Activated CD8-positive, alpha-beta memory T cell treated with anti-CD3 and anti-CD28 coated beads, Interleukin-2, amount 10 ng/mL, durations not matched to agents 7 days and 5 days (primary cell): ENCODE measurements at regions of chr2 and their contacts with region 1.

Region 1: DNA sequence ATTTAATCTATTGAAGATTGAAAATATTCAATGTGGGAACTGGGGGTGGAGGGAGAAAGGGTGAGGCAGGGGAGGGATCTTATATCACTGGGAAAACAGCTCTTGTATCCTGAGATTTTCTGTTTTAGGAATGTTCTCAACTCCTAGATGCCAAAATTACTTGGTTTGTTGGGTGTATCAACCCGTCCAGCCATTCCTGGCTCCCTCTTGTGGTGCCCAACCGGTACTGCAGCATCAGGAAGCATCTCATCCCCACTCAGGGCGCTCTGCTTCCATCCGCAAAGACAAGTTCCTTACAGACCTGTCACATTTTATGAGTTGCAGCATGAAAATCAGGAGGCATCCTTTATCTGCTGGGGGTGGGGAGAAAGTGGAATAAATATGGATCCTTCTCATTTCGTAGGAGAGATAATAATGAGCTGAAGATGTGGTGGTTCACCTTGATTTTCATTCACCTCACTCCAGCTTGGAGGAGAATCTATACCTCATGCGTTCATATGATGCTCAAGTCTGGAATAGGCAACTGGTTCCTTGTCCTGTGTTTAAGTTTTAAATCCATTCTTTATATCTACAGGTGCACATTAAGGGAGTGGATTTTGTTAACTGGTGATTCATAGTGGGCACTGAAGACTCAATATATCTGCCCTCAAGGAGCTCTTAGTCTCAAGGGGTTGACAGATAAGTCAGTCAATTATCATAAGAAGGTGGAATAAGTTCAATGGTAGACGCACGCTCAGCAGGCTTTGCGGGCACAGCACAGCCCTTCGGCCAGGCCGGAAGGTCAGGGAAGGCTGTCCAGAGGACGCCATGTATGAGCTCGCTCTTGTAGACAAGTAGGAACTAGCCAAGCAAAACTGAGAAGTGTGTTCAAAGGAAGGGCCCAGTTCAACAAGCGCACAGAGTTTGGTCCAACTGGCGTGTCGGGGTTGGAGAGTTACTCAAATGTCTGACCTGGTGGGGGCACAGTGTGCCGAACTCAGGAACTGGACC is 127.3 kb downstream of the RNF144A start:
- DNase-seq: peak; percentile 73
- ATAC-seq: peak; percentile 75
- H3K4me3 Mint-ChIP-seq: no peak overlapping the region
- H3K27ac Mint-ChIP-seq: no peak overlapping the region
- H3K4me1 Mint-ChIP-seq: peaks cover 8% of the 10 kb centered on the region
- H3K27me3 Mint-ChIP-seq: no peaks in the 10 kb centered on the region

Region 2: DNA sequence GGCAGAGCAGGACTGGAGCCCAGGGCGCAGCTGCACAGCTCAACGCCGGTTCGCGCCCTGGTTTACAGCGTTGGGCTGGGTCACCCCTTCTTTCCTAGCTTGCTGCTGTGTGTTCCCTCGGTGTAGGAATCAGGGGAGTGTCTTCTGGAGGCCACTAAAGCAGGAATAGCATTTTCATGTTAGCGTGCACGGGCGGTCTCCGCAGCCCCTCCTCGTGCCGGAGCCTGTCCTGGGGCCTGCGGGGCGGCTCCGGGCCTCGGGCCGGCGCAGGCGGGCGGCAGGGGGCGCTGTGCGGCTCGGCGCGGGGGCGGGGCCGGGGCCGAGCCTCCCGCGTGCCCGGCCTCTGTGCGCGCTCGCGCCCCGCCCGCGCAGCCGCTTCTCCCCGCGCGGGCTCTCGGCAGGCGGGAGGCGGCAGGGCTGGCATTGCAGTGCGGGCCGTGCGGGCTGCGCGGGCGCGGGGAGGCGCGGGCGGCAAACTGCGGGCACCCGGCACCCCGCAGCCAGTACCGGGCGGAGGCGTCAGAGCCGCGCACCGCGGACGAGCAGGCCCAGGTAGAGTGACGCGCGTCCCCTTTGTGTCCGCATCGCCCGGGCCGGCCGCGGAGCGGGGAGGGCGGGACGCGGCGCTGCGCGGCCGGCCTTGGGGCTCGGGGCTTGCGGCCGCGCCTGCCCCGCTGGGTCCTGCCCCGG is 127.3 kb before region 1 on chr2 and contains the start of gene RNF144A:
- CTCF ChIA-PET with region 1: interaction called, 13 read pairs
- DNase-seq: peak; percentile 68
- ATAC-seq: peak; percentile 88
- H3K4me3 Mint-ChIP-seq: peak within 1 kb of the TSS; percentile 66
- H3K27ac Mint-ChIP-seq: peak within 1 kb of the TSS; percentile 64
- H3K4me1 Mint-ChIP-seq: peaks cover 46% of the 10 kb centered on the region
- H3K27me3 Mint-ChIP-seq: peaks cover 11% of the 10 kb centered on the region
- total RNA-seq, gene RNF144A: 20.0 to 35.5 TPM

Region 3: GRCh38 chr2:6968319-6969100 is 76.0 kb before region 1 on chr2:
- CTCF ChIA-PET with region 1: no interaction called
- DNase-seq: peak; percentile 19
- ATAC-seq: no peak
- H3K4me3 Mint-ChIP-seq: no peak overlapping the region
- H3K27ac Mint-ChIP-seq: no peak overlapping the region
- H3K4me1 Mint-ChIP-seq: no peaks in the 10 kb centered on the region
- H3K27me3 Mint-ChIP-seq: no peaks in the 10 kb centered on the region

Region 4: DNA sequence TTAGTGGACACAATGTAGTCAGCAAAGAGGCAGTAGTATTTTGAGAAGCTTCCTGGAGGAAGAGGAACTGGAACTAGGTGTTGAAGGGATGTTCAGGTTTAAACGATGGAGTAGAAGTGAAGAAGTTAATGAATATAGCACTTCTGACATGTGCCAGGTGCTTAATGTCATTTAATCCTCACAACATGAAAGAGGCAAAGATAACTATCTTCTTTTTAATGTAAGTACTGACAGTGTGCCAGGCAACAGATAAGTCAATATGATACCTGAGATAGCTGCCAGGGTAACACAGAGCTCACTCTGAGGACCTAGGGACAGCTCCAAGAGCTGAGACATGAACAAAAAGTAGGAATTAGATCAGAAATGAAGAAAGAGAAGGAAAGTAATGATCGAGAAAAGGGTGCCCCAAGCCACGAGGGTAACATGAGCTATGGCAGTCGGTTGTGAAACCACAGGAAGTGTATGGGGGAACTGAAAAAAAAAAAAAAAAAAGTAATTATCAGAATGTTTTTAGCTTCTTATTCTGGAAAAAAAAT is 13.4 kb after region 1 on chr2:
- CTCF ChIA-PET with region 1: interaction called, 23 read pairs
- DNase-seq: no peak
- ATAC-seq: peak; percentile 49
- H3K4me3 Mint-ChIP-seq: no peak overlapping the region
- H3K27ac Mint-ChIP-seq: peak overlapping the region; percentile 77
- H3K4me1 Mint-ChIP-seq: peaks cover 24% of the 10 kb centered on the region
- H3K27me3 Mint-ChIP-seq: no peaks in the 10 kb centered on the region